CD4-positive, alpha-beta memory T cell (primary cell): ENCODE measurements at regions of chr3 and their contacts with region 1.

Region 1: GRCh38 chr3:31213869-31214486 is 318.7 kb upstream of the STT3B start:
- DNase-seq: peak; percentile 73 to 87 (median 82)
- H3K4me3 ChIP-seq: no peak overlapping the region
- H3K4me3 Mint-ChIP-seq: peak overlapping the region; percentile 53 to 89 (median 78)
- H3K27ac ChIP-seq: no peak overlapping the region
- H3K27ac Mint-ChIP-seq: peak overlapping the region; percentile 54 to 96 (median 81)
- H3K4me1 ChIP-seq: peaks cover 88% of the 10 kb centered on the region
- H3K4me1 Mint-ChIP-seq: peaks cover 82 to 100% (median 93%) of the 10 kb centered on the region in 4 donors
- H3K27me3 ChIP-seq: no peaks in the 10 kb centered on the region
- H3K27me3 Mint-ChIP-seq: no peaks in the 10 kb centered on the region

Region 2: DNA sequence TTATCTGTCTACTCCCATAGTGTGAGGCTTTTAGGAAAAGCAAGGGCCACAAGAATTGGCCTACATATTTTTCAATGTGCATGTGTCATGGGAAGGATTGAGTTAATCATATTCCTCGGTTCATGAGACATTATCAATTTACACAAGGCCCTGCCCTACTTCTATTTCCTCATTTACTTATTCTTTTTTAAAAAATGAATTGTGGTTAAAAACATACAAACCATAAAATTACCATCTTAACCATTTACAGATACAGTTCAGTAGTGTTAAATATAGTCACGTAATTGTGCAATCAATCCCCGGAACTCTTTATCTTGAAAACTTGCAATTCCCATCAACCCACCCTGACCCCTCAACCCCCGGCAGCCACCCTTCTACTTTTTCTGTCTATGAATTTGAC is 35.5 kb before region 1 on chr3:
- CTCF ChIA-PET with region 1: no interaction called
- POLR2A ChIA-PET with region 1: no interaction called
- intact Hi-C with region 1: loop called (anchors 5 kb)
- DNase-seq: peak in 1 of 5 donors; percentile 5
- H3K4me3 ChIP-seq: no peak overlapping the region
- H3K4me3 Mint-ChIP-seq: peak overlapping the region in 3 of 8 donors; percentile 10 to 53 (median 47)
- H3K27ac ChIP-seq: no peak overlapping the region
- H3K27ac Mint-ChIP-seq: peak overlapping the region in 2 of 7 donors; percentile 5 to 52
- H3K4me1 ChIP-seq: peaks cover 4% of the 10 kb centered on the region
- H3K4me1 Mint-ChIP-seq: peaks cover 10 to 12% (median 11%) of the 10 kb centered on the region in 4 donors
- H3K27me3 ChIP-seq: no peaks in the 10 kb centered on the region
- H3K27me3 Mint-ChIP-seq: no peaks in the 10 kb centered on the region

Region 3: DNA sequence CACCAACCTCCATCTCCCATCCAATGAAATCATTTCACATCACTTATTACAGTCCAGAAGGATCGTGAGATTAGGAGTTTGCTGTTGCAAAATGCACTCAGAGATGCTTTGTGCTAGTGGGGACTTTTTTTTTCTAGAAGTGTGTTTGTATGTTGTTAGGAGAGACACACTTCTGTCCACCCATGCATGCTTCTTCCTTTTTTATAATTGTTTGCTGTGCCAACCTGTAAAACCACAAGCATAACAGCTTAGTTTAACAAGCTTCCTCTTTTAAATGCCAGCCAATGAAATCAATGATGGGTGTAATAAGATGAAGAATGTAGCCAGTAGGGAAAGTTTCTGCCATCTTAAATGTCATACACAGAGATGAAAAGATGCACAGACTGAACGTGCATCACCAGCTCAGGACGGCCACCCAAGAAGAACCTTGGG is 13.2 kb after region 1 on chr3:
- CTCF ChIA-PET with region 1: interaction called, 22 read pairs
- POLR2A ChIA-PET with region 1: interaction called, 105 read pairs
- intact Hi-C with region 1: loop called (anchors 1 kb)
- DNase-seq: peak; percentile 49 to 82 (median 73)
- H3K4me3 ChIP-seq: no peak overlapping the region
- H3K4me3 Mint-ChIP-seq: peak overlapping the region; percentile 38 to 74 (median 64)
- H3K27ac ChIP-seq: peak overlapping the region; percentile 45
- H3K27ac Mint-ChIP-seq: peak overlapping the region; percentile 81 to 96 (median 93)
- H3K4me1 ChIP-seq: peaks cover 99% of the 10 kb centered on the region
- H3K4me1 Mint-ChIP-seq: peaks cover 71 to 96% (median 86%) of the 10 kb centered on the region in 4 donors
- H3K27me3 ChIP-seq: no peaks in the 10 kb centered on the region
- H3K27me3 Mint-ChIP-seq: no peaks in the 10 kb centered on the region

Region 4: GRCh38 chr3:31232055-31233025 is 18.4 kb after region 1 on chr3:
- CTCF ChIA-PET with region 1: interaction called, 22 read pairs
- POLR2A ChIA-PET with region 1: interaction called, 105 read pairs
- intact Hi-C with region 1: no loop called
- DNase-seq: no peak
- H3K4me3 ChIP-seq: no peak overlapping the region
- H3K4me3 Mint-ChIP-seq: peak overlapping the region in 7 of 8 donors; percentile 2 to 77 (median 54)
- H3K27ac ChIP-seq: no peak overlapping the region
- H3K27ac Mint-ChIP-seq: peak overlapping the region; percentile 72 to 92 (median 83)
- H3K4me1 ChIP-seq: peaks cover 80% of the 10 kb centered on the region
- H3K4me1 Mint-ChIP-seq: peaks cover 62 to 85% (median 74%) of the 10 kb centered on the region in 4 donors
- H3K27me3 ChIP-seq: no peaks in the 10 kb centered on the region
- H3K27me3 Mint-ChIP-seq: no peaks in the 10 kb centered on the region

Region 5: GRCh38 chr3:31288641-31289100 is 74.7 kb after region 1 on chr3:
- CTCF ChIA-PET with region 1: no interaction called
- POLR2A ChIA-PET with region 1: no interaction called
- intact Hi-C with region 1: no loop called
- DNase-seq: peak in 3 of 5 donors; percentile 9 to 46 (median 12)
- H3K4me3 ChIP-seq: no peak overlapping the region
- H3K4me3 Mint-ChIP-seq: peak overlapping the region in 3 of 8 donors; percentile 15 to 75 (median 58)
- H3K27ac ChIP-seq: no peak overlapping the region
- H3K27ac Mint-ChIP-seq: peak overlapping the region in 6 of 7 donors; percentile 31 to 85 (median 57)
- H3K4me1 ChIP-seq: peaks cover 13% of the 10 kb centered on the region
- H3K4me1 Mint-ChIP-seq: peaks cover 20 to 35% (median 25%) of the 10 kb centered on the region in 4 donors
- H3K27me3 ChIP-seq: no peaks in the 10 kb centered on the region
- H3K27me3 Mint-ChIP-seq: no peaks in the 10 kb centered on the region

Region 6: GRCh38 chr3:31377045-31377642 is 163.2 kb after region 1 on chr3:
- CTCF ChIA-PET with region 1: no interaction called
- POLR2A ChIA-PET with region 1: interaction called, 5 read pairs
- intact Hi-C with region 1: loop called (anchors 5 kb)
- DNase-seq: peak; percentile 47 to 68 (median 59)
- H3K4me3 ChIP-seq: no peak overlapping the region
- H3K4me3 Mint-ChIP-seq: no peak overlapping the region
- H3K27ac ChIP-seq: no peak overlapping the region
- H3K27ac Mint-ChIP-seq: peak overlapping the region in 4 of 7 donors; percentile 19 to 49 (median 33)
- H3K4me1 ChIP-seq: peaks cover 13% of the 10 kb centered on the region
- H3K4me1 Mint-ChIP-seq: peaks cover 11 to 21% (median 15%) of the 10 kb centered on the region in 4 donors
- H3K27me3 ChIP-seq: no peaks in the 10 kb centered on the region
- H3K27me3 Mint-ChIP-seq: no peaks in the 10 kb centered on the region

Region 7: GRCh38 chr3:31462050-31462569 is 248.1 kb after region 1 on chr3:
- CTCF ChIA-PET with region 1: no interaction called
- POLR2A ChIA-PET with region 1: interaction called, 10 read pairs
- intact Hi-C with region 1: loop called (anchors 1 kb)
- DNase-seq: peak; percentile 81 to 88 (median 88)
- H3K4me3 ChIP-seq: peak overlapping the region; percentile 42 to 51
- H3K4me3 Mint-ChIP-seq: peak overlapping the region; percentile 68 to 92 (median 81)
- H3K27ac ChIP-seq: peak overlapping the region; percentile 45
- H3K27ac Mint-ChIP-seq: peak overlapping the region; percentile 88 to 98 (median 94)
- H3K4me1 ChIP-seq: peaks cover 68% of the 10 kb centered on the region
- H3K4me1 Mint-ChIP-seq: peaks cover 48 to 74% (median 61%) of the 10 kb centered on the region in 4 donors
- H3K27me3 ChIP-seq: no peaks in the 10 kb centered on the region
- H3K27me3 Mint-ChIP-seq: no peaks in the 10 kb centered on the region